Activated CD4-positive, alpha-beta T cell treated with anti-CD3 and anti-CD28 coated beads, Interleukin-2, amount 10 ng/mL, durations not matched to agents 24 days and 14 days (primary cell): ENCODE measurements at regions of chrX and their contacts with region 1.

Region 1: DNA sequence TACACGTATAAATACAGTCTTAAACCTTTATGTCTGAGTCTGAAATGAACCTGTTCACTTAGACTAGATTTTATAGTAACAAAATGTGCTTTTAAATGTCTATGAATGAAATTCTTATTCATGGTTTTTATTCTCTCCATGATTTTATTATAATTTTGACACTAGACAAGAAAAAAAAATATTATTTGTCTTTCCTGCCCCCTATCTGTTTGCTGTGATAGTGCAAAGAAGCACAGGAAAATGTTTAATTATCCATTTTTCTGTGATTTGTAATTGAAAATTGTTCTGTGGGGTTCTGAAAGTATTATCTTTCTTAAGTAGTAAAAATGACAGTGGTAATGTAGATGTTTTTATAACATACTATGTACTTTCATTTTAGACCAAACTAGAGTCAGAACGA is 52.0 kb downstream of the INTS6L start:
- DNase-seq: no peak
- H3K4me3 Mint-ChIP-seq: no peak overlapping the region
- H3K27ac Mint-ChIP-seq: no peak overlapping the region
- H3K4me1 Mint-ChIP-seq: peaks cover 2% of the 10 kb centered on the region
- H3K27me3 Mint-ChIP-seq: no peaks in the 10 kb centered on the region

Region 2: DNA sequence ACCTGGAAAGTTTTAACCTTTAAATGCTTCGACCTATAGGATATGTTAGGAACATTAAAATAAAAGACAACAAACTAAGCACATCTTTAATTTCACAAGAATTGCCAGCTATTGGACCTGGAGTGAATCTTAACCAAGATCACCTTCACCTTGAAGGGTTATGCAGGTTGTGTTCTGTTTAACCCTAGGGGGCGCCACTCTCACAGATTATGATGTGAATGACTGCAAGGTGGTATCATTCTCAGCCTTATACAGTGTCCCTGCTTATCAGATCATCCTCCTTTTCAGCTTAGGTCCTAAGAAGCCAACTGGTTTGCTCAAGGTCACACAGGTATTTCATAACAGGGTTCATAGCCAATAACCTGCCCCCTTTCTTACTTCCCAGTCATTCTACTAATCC is 28.5 kb before region 1 on chrX:
- intact Hi-C with region 1: loop called (anchors 5 kb)
- DNase-seq: peak; percentile 73
- H3K4me3 Mint-ChIP-seq: peak overlapping the region; percentile 3
- H3K27ac Mint-ChIP-seq: no peak overlapping the region
- H3K4me1 Mint-ChIP-seq: peaks cover 23% of the 10 kb centered on the region
- H3K27me3 Mint-ChIP-seq: no peaks in the 10 kb centered on the region

Region 3: GRCh38 chrX:135688137-135688536 is 115.7 kb after region 1 on chrX:
- intact Hi-C with region 1: no loop called
- DNase-seq: no peak
- H3K4me3 Mint-ChIP-seq: no peak overlapping the region
- H3K27ac Mint-ChIP-seq: no peak overlapping the region
- H3K4me1 Mint-ChIP-seq: no peaks in the 10 kb centered on the region
- H3K27me3 Mint-ChIP-seq: no peaks in the 10 kb centered on the region